Posterior vena cava (tissue), 2 donors: ENCODE measurements at regions of chr11 and their contacts with region 1.

Region 1: DNA sequence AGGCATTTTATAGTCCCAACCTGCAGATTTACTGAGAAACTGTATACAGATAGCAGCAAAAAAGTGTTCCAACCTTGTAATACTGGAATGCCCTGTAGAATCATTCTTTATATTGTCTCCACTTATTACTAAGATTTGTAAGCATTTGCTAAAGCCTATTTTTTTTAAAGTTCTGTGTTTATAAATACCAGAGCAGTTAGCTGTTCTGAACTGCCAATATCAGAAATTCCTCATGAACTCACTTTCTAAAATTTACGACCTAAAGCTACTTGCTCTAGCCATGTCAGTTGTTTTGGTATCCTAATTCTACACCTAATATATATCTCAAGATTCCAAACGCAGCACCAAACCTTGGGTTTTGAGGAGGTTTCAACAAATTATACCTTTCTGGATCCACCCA is 103.2 kb downstream of the C11orf65 start:
- DNase-seq: no peak

Region 2: GRCh38 chr11:107011977-107012376 is 1352.2 kb before region 1 on chr11:
- intact Hi-C with region 1: no loop called
- DNase-seq: no peak

Region 3: GRCh38 chr11:109236696-109237095 is 872.5 kb after region 1 on chr11:
- intact Hi-C with region 1: loop called in 1 of 2 experiments (anchors 5 kb)
- DNase-seq: no peak